Endothelial cell of umbilical vein (primary cell): ENCODE measurements at regions of chr14 and their contacts with region 1.

Region 1: DNA sequence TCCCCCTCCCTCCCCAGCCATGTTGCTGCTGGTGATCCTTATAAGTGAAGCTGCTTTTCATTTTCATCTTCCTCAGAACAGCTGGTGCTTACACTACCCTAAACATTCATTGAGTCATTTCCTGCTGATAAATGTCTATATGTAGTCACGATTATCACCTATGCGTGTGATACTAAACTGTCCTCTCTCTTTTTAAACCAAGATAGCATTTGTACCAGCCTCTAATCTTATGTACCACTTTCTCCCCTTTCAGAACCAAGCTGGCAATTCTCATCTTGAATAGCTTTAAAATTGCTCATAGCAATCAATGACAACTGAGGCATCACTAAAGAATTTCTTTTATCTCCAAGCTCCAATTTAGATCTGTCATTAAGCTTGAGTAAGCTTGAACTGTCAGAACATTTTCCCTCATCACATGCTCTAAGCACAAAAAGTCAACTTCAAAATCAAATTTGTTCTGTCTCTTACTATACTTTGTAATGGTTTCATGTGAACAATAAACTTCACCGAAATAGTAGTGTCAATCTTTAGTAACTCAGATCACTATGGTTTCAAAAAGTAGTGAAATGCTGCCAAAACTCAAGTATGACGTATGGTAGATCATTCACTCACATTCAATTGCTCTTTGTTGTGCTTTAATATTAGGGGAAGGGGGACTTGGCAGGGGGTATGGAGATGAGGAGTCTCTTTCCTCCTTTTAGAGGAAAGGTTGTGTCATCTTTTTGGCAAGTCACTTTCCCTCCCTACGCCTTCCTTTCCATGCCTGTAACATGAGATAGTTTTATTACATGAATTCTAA is 178.1 kb upstream of the NOVA1 start:
- DNase-seq: peak; percentile 58
- H3K4me3 ChIP-seq: peak overlapping the region in 2 of 3 experiments; percentile 41 to 48
- H3K27ac ChIP-seq: peak overlapping the region; percentile 65
- H3K4me1 ChIP-seq: peaks cover 30% of the 10 kb centered on the region
- H3K27me3 ChIP-seq: no peaks in the 10 kb centered on the region
- CTCF ChIP-seq: no peak
- POLR2A ChIP-seq: no peak

Region 2: GRCh38 chr14:26709019-26709418 is 66.9 kb before region 1 on chr14:
- CTCF ChIA-PET with region 1: no interaction called
- POLR2A ChIA-PET with region 1: no interaction called
- dilution Hi-C with region 1: no loop called
- intact Hi-C with region 1: loop called (anchors 5 kb)
- DNase-seq: peak; percentile 84
- H3K4me3 ChIP-seq: no peak overlapping the region
- H3K27ac ChIP-seq: peak overlapping the region; percentile 12
- H3K4me1 ChIP-seq: peaks cover 15% of the 10 kb centered on the region
- H3K27me3 ChIP-seq: no peaks in the 10 kb centered on the region
- CTCF ChIP-seq: no peak
- POLR2A ChIP-seq: peak; percentile 37

Region 3: GRCh38 chr14:26841920-26842741 is 66.2 kb after region 1 on chr14:
- CTCF ChIA-PET with region 1: no interaction called
- POLR2A ChIA-PET with region 1: interaction called, 3 read pairs
- dilution Hi-C with region 1: no loop called
- intact Hi-C with region 1: loop called (anchors 2 kb)
- DNase-seq: peak; percentile 76
- H3K4me3 ChIP-seq: no peak overlapping the region
- H3K27ac ChIP-seq: peak overlapping the region; percentile 71
- H3K4me1 ChIP-seq: peaks cover 14% of the 10 kb centered on the region
- H3K27me3 ChIP-seq: no peaks in the 10 kb centered on the region
- CTCF ChIP-seq: no peak
- POLR2A ChIP-seq: no peak

Region 4: DNA sequence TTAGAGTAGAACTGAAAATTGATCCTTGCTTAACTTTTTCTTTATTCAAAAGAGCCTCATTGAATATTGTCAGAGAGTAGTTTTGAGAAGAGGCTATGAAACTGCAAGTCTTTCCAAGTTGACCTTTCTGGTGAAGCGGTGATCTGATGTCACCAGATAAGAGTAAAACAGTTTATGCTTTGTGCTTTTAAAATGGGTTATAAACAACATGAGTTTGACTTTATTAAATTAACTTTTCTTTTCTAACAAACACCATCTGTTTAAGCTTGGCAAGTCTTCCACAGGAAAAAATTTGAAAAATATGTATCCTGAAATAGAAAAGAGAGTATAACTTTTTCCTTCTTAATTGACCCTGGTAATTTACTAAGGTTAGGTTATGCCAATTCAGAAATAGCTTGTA is 230.6 kb after region 1 on chr14:
- CTCF ChIA-PET with region 1: no interaction called
- POLR2A ChIA-PET with region 1: no interaction called
- dilution Hi-C with region 1: no loop called
- intact Hi-C with region 1: no loop called
- DNase-seq: no peak
- H3K4me3 ChIP-seq: no peak overlapping the region
- H3K27ac ChIP-seq: no peak overlapping the region
- H3K4me1 ChIP-seq: no peaks in the 10 kb centered on the region
- H3K27me3 ChIP-seq: no peaks in the 10 kb centered on the region
- CTCF ChIP-seq: no peak
- POLR2A ChIP-seq: no peak